Sciatic nerve (tissue), 2 donors: ENCODE measurements at regions of chr1 and their contacts with region 1.

Region 1: DNA sequence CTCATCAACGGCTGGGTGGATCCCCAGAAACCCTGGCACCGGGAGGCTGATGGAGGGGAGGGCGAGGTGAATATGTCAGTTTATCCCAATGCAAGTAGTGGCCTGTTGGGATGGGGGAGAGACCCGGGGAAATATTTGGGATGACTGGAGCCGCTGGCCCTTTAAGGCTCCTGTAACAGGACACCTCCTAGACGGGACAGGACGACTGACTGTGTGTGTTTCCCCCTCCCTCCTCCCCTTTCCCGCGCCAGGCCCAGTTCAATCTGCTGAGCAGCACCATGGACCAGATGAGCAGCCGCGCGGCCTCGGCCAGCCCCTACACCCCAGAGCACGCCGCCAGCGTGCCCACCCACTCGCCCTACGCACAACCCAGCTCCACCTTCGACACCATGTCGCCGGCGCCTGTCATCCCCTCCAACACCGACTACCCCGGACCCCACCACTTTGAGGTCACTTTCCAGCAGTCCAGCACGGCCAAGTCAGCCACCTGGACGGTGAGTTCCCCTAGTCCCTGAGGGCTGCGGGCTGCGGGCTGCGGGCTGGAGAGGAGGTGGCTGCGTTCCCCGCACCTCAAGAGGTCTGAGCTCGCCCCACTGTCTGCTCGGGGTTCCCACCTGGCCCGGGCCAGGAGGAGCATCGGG is 44.8 kb upstream of the CCDC27 start:
- DNase-seq: no peak
- ATAC-seq: no peak

Region 2: GRCh38 chr1:3738943-3739342 is 31.5 kb after region 1 on chr1:
- intact Hi-C with region 1: loop called (anchors 2 kb)
- DNase-seq: no peak
- ATAC-seq: no peak